ENCODE measurements at regions of chr20 and their contacts with region 1.

Region 1: GRCh38 chr20:35994994-35995453 is 26.6 kb downstream of the CNBD2 start:
- DNase-seq: no peak
- H3K4me3 ChIP-seq: no peak overlapping the region
- CTCF ChIP-seq: peak; percentile 96

Region 2: GRCh38 chr20:35939264-35939663 is 55.8 kb before region 1 on chr20:
- CTCF ChIA-PET with region 1: no interaction called
- POLR2A ChIA-PET with region 1: no interaction called
- DNase-seq: no peak
- H3K4me3 ChIP-seq: no peak overlapping the region
- CTCF ChIP-seq: no peak

Region 3: DNA sequence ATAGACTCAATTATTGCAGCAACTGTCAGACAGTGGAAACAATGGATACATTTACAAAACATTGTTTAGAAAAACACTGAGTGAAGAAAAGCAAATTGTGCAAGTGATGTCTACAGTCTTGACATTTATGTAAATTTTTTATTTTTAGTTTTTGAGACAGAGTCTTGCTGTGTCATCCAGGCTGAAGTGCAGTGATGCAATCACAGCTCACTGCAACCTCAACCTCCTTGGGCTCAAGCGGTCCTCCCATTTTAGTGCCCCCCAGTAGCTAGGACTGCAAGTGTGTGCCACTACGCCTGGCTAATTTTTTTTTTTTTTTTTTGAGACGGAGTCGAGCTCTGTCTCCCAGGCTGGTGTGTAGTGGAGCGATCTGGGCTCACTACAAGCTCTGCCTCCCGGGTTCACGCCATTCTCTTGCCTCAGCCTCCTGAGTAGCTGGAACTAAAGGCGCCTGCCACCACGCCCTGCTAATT is 16.9 kb before region 1 on chr20:
- CTCF ChIA-PET with region 1: interaction called, 128 read pairs
- POLR2A ChIA-PET with region 1: no interaction called
- DNase-seq: no peak
- H3K4me3 ChIP-seq: no peak overlapping the region
- CTCF ChIP-seq: no peak

Region 4: GRCh38 chr20:36028106-36028826 is 33.2 kb after region 1 on chr20:
- CTCF ChIA-PET with region 1: interaction called, 12 read pairs
- POLR2A ChIA-PET with region 1: no interaction called
- DNase-seq: no peak
- H3K4me3 ChIP-seq: no peak overlapping the region
- CTCF ChIP-seq: no peak

Region 5: GRCh38 chr20:36116807-36117441 is 121.9 kb after region 1 on chr20:
- CTCF ChIA-PET with region 1: interaction called, 57 read pairs
- POLR2A ChIA-PET with region 1: no interaction called
- DNase-seq: peak; percentile 63
- H3K4me3 ChIP-seq: no peak overlapping the region
- CTCF ChIP-seq: no peak

Region 6: GRCh38 chr20:36199345-36200257 is 204.6 kb after region 1 on chr20:
- CTCF ChIA-PET with region 1: interaction called, 145 read pairs
- POLR2A ChIA-PET with region 1: no interaction called
- DNase-seq: peak; percentile 9
- H3K4me3 ChIP-seq: no peak overlapping the region
- CTCF ChIP-seq: peak; percentile 87